HEK293 (cell line): ENCODE measurements at regions of chr15 and their contacts with region 1.

Region 1: GRCh38 chr15:29102912-29103823 is 166.5 kb downstream of the NSMCE3 start:
- H3K4me3 ChIP-seq: peak overlapping the region; percentile 34
- H3K27ac ChIP-seq: peak overlapping the region; percentile 46; the same call in 1 of the 2 replicates
- H3K4me1 ChIP-seq: no peaks in the 10 kb centered on the region
- CTCF ChIP-seq: no peak

Region 2: DNA sequence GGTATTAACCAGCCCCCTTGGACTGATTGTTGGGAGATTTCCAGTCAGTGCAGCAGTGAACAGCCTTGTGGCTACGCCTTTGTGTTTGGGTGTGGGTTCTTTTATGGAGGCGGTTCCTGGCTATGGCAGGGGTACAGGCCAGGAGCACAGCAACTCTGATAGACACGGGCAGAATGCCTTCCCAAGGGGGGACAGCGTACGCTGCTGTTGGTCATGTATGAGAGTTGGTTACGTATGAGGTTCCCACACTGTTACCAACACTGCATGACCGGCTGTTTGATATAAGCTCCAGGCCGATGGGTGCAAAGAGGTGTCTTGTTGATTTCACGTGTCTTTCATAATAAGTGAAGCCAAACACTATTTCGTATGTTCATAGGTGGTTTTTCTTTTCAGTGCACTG is 21.4 kb before region 1 on chr15:
- CTCF ChIA-PET with region 1: interaction called, 10 read pairs
- POLR2A ChIA-PET with region 1: no interaction called
- H3K4me3 ChIP-seq: no peak overlapping the region
- H3K27ac ChIP-seq: no peak overlapping the region
- H3K4me1 ChIP-seq: no peaks in the 10 kb centered on the region
- CTCF ChIP-seq: no peak

Region 3: DNA sequence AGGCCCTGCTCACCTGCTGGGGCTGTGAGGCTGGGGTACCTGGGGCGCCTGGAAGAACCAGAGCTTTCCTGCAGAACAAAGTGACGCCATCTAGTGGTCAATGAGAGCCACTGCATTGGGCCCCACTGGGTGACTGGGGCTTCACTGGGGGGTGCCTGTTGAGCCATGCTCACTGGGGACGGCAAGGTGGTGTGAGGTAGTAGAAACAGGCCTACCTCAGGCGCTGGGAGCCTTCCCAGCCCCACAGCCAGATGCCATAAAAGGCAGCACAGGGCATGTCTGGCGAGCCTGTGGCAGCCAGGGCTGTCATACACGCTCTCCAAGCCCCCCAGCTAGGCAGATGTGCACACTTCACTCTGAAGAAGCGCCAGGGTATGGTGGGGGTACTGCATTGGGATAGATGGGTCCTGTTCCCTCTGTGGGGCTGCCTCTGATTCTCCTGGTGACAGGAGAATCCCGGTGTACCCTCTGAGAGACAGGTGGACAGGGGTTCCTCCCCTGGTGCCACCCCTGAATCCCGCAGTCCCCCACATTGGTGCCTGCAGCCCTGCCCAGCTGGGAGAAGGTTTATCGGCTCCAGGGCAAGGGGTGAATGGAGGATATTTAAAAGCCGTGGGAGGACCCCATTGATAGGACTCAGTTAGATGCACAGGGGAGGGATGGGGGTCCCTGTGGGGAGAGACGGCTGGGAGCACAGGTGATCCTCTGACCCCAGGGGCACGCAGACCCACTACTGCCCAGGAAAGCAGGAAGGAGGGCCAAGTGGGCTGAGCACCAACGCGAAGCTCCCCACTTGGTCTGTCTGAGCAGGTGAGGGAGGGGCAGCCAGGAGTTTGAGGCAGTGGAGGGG is 12.3 kb before region 1 on chr15:
- CTCF ChIA-PET with region 1: interaction called, 11 read pairs
- POLR2A ChIA-PET with region 1: no interaction called
- H3K4me3 ChIP-seq: no peak overlapping the region
- H3K27ac ChIP-seq: no peak overlapping the region
- H3K4me1 ChIP-seq: no peaks in the 10 kb centered on the region
- CTCF ChIP-seq: no peak